Heart left ventricle (tissue), 16 donors: ENCODE measurements at regions of chr7 and their contacts with region 1.

Region 1: DNA sequence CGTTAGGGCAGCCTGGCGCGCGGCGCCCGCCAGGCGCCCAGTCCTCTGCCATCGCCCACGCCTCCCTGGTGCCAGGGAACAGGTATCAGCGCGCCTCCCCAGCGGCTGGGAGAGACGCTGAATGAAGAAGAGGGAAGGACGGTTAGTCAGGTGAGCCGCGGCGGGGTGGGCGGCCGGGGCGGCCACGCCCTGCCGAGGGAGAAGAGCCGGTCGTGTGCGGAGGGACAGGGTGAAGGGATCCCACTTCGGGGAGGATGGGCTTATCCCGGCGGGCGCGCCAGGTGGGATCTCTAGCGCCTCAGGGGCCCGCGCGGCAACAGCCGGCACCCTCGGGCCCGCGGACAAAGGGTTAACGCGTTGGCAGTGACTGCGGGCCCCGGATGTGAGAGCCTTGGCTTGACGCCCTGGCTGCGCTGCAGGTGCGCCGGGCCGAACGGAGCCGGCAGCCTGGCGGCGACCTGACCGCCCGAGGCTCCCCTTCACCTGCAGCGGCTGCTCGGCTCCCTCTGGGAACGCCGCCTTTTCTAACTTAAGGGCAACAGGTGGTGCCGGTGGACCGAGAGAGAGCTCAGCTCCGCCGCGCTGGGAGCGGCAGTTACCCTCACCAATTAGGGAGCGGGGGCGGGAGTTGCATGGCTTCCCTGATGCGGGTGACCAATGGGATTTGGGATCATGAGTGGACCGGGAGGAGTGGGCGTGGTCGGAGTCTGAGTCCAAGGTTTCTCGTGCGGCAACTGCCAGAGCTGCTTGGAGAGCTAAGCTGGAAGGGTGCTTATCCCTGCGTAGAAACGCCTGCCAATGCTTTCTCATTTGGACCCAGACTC is at the start of gene ARL4A:
- DNase-seq: peak; percentile 98 to 100 (median 99)
- ATAC-seq: peak; percentile 96 to 98 (median 98)
- H3K4me3 ChIP-seq: peak within 1 kb of the TSS; percentile 67 to 97 (median 87)
- H3K27ac ChIP-seq: peak within 1 kb of the TSS; percentile 49 to 93 (median 88)
- H3K4me1 ChIP-seq: peaks cover 0 to 21% (median 12%) of the 10 kb centered on the region in 12 donors
- H3K27me3 ChIP-seq: no peaks in the 10 kb centered on the region
- CTCF ChIP-seq: peak in 11 of 12 donors; percentile 9 to 68 (median 48)
- POLR2A ChIP-seq: peak; percentile 76 to 92
- total RNA-seq, gene ARL4A: 12.8 to 21.4 (median 14.5) TPM

Region 2: GRCh38 chr7:12729112-12729511 is 42.0 kb after region 1 on chr7:
- intact Hi-C with region 1: loop called in 7 of 10 experiments (anchors 2 to 5 kb)
- DNase-seq: peak; percentile 82 to 89 (median 88)
- ATAC-seq: peak; percentile 73 to 87 (median 78)
- H3K4me3 ChIP-seq: peak overlapping the region in 3 of 12 donors; percentile 3 to 15 (median 4)
- H3K27ac ChIP-seq: peak overlapping the region; percentile 23 to 75 (median 62)
- H3K4me1 ChIP-seq: peaks cover 4 to 57% (median 40%) of the 10 kb centered on the region in 12 donors
- H3K27me3 ChIP-seq: no peaks in the 10 kb centered on the region
- CTCF ChIP-seq: no peak
- POLR2A ChIP-seq: no peak

Region 3: DNA sequence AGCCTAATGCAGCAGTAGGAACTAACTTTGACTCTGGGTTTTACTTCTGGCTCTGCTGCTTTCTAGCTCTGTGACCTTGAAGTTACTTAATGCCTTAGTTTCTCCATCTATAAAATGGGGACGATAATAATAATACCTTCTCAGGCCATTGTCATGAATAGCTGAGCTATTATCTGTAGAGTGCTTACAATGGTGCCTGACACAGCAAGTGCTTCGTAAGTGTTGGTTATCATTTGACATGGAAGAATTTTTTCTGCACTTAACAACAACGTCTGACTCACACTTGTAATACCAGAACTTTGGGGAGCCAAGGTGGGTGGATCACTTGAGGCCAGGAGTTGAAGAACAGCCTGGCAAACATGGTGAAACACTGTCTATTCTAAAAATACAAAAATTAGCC is 140.8 kb after region 1 on chr7:
- intact Hi-C with region 1: loop called in 1 of 10 experiments (anchors 5 kb)
- DNase-seq: no peak
- ATAC-seq: peak; percentile 58 to 92 (median 70)
- H3K4me3 ChIP-seq: no peak overlapping the region
- H3K27ac ChIP-seq: peak overlapping the region in 10 of 12 donors; percentile 30 to 84 (median 58)
- H3K4me1 ChIP-seq: peaks cover 0 to 5% (median 0%) of the 10 kb centered on the region in 12 donors
- H3K27me3 ChIP-seq: no peaks in the 10 kb centered on the region
- CTCF ChIP-seq: no peak
- POLR2A ChIP-seq: no peak

Region 4: GRCh38 chr7:13024121-13024674 is 337.1 kb after region 1 on chr7:
- intact Hi-C with region 1: loop called in 1 of 10 experiments (anchors 10 kb)
- DNase-seq: no peak
- ATAC-seq: peak in 1 of 4 donors; percentile 30
- H3K4me3 ChIP-seq: no peak overlapping the region
- H3K27ac ChIP-seq: peak overlapping the region in 1 of 12 donors; percentile 28
- H3K4me1 ChIP-seq: peaks cover 0 to 25% (median 1%) of the 10 kb centered on the region in 12 donors
- H3K27me3 ChIP-seq: no peaks in the 10 kb centered on the region
- CTCF ChIP-seq: no peak
- POLR2A ChIP-seq: no peak

Region 5: DNA sequence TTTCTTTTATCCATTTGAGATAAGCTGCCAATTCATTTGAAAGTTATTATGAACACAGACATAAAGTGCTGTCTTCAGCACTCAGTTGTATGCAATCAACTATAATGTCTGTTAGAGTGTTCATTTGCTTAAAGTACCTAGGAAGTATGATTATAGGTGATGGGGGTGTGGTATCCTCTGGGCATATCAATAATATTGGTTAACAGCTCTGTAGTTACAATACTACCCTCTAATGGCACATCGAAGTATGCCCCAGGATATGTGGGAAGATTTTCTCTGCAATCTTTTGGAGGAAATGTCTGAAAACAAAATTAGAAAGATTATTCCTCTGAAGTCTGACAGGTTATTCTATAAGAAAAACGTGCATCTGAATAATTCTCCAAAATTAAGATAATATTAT is 430.0 kb after region 1 on chr7:
- intact Hi-C with region 1: loop called in 8 of 10 experiments (anchors 2 to 10 kb)
- DNase-seq: no peak
- ATAC-seq: no peak
- H3K4me3 ChIP-seq: no peak overlapping the region
- H3K27ac ChIP-seq: no peak overlapping the region
- H3K4me1 ChIP-seq: no peaks in the 10 kb centered on the region
- H3K27me3 ChIP-seq: no peaks in the 10 kb centered on the region
- CTCF ChIP-seq: peak in 9 of 12 donors; percentile 10 to 49 (median 32)
- POLR2A ChIP-seq: no peak

Region 6: GRCh38 chr7:13262929-13263530 is 575.9 kb after region 1 on chr7:
- intact Hi-C with region 1: loop called in 9 of 10 experiments (anchors 2 to 10 kb)
- DNase-seq: no peak
- ATAC-seq: peak in 1 of 4 donors; percentile 63
- H3K4me3 ChIP-seq: no peak overlapping the region
- H3K27ac ChIP-seq: no peak overlapping the region
- H3K4me1 ChIP-seq: no peaks in the 10 kb centered on the region
- H3K27me3 ChIP-seq: no peaks in the 10 kb centered on the region
- CTCF ChIP-seq: peak; percentile 41 to 81 (median 62)
- POLR2A ChIP-seq: no peak